Lower leg skin (tissue), 4 donors: ENCODE measurements at regions of chr3 and their contacts with region 1.

Region 1: DNA sequence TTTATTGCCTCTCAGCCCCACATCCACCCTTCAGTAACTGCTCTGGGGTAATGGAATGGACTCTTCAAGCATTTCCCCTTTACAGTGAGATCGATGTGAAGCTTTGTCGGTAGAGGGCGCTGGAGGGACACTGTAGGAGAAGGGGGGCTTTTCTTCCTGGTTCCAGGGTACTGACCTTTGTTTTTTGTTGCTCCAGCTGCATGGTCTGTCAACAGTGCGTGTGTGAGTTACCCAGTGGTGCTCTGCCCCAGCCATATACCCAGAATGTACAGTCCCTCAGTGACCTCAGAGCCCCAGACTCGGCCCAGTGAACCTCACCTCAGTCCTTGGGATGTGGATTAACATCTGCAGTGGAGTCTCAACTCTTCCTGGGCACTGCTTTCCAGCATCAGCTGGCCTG is 180.3 kb upstream of the TSC22D2 start:
- DNase-seq: peak in 1 of 2 donors; percentile 79
- H3K4me3 ChIP-seq: no peak overlapping the region
- CTCF ChIP-seq: no peak
- POLR2A ChIP-seq: no peak

Region 2: GRCh38 chr3:150421799-150422548 is 194.1 kb after region 1 on chr3:
- intact Hi-C with region 1: loop called (anchors 10 kb)
- DNase-seq: no peak
- H3K4me3 ChIP-seq: no peak overlapping the region
- CTCF ChIP-seq: no peak
- POLR2A ChIP-seq: no peak